PC-9 (cell line): ENCODE measurements at regions of chr6 and their contacts with region 1.

Region 1: DNA sequence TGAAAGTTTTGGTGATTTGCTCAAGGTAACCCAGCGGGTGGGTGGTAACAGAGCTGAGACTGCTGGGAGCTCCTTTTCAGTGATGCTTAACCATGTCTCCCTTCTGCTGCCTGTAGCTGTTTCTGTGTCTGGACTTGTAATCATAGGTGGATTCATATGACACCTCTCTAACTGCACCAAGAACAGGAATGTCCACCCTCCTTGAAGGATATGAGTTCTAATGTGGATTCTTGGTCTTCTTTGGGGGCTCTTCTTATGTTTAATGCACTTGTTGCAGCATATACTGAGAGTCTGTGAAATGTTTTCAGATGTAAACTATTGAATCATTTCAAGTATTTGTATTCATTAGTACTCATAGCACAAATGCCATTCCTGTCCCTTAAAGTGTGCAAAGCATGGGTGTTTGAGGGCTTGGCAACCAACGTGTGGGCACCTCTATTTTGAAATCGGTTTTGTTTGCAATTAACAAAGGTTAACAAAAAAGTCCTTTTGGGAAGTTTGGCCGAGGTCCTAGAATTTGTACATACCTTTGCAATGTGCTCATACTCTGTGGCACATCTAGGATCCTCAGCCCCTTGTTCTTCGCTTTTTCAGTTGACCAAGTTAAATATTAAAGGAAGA is 138.0 kb downstream of the SOX4 start:
- DNase-seq: peak; percentile 68 to 95
- H3K4me3 ChIP-seq: no peak overlapping the region
- H3K27ac ChIP-seq: peak overlapping the region; percentile 63
- H3K4me1 ChIP-seq: peaks cover 43% of the 10 kb centered on the region
- H3K27me3 ChIP-seq: no peaks in the 10 kb centered on the region
- CTCF ChIP-seq: no peak

Region 2: GRCh38 chr6:21603082-21603952 is 128.2 kb before region 1 on chr6:
- CTCF ChIA-PET with region 1: no interaction called
- POLR2A ChIA-PET with region 1: no interaction called
- intact Hi-C with region 1: no loop called
- DNase-seq: no peak
- H3K4me3 ChIP-seq: no peak overlapping the region
- H3K27ac ChIP-seq: no peak overlapping the region
- H3K4me1 ChIP-seq: peaks cover 14% of the 10 kb centered on the region
- H3K27me3 ChIP-seq: no peaks in the 10 kb centered on the region
- CTCF ChIP-seq: no peak

Region 3: GRCh38 chr6:21754891-21755290 is 23.4 kb after region 1 on chr6:
- CTCF ChIA-PET with region 1: interaction called, 4 read pairs
- POLR2A ChIA-PET with region 1: interaction called, 8 read pairs
- intact Hi-C with region 1: loop called (anchors 1 kb)
- DNase-seq: peak; percentile 66 to 91
- H3K4me3 ChIP-seq: peak overlapping the region; percentile 13; the same call in 1 of the 2 replicates
- H3K27ac ChIP-seq: peak overlapping the region; percentile 73
- H3K4me1 ChIP-seq: peaks cover 53% of the 10 kb centered on the region
- H3K27me3 ChIP-seq: no peaks in the 10 kb centered on the region
- CTCF ChIP-seq: no peak

Region 4: DNA sequence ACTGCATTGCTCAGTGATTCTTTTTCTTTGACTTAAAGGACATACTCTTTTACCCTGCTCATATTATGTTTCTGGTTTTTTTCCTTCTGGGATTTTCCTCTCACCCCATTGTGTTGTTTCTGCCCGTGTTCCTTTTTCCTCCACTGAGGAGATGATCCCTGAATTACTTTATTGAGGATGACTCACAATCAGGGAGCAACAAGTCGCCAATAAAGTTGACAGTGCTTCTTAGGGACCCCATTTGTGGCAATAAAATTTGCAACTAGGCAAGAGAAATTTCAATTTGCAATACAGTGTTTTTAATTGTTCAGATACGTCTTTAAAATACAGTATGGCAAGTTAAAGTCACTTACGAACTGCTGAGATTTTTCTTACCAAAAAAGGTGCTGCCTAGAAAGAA is 80.0 kb after region 1 on chr6:
- CTCF ChIA-PET with region 1: no interaction called
- POLR2A ChIA-PET with region 1: no interaction called
- intact Hi-C with region 1: no loop called
- DNase-seq: no peak
- H3K4me3 ChIP-seq: no peak overlapping the region
- H3K27ac ChIP-seq: no peak overlapping the region
- H3K4me1 ChIP-seq: peaks cover 5% of the 10 kb centered on the region; the same call in 1 of the 2 replicates
- H3K27me3 ChIP-seq: no peaks in the 10 kb centered on the region
- CTCF ChIP-seq: no peak

Region 5: DNA sequence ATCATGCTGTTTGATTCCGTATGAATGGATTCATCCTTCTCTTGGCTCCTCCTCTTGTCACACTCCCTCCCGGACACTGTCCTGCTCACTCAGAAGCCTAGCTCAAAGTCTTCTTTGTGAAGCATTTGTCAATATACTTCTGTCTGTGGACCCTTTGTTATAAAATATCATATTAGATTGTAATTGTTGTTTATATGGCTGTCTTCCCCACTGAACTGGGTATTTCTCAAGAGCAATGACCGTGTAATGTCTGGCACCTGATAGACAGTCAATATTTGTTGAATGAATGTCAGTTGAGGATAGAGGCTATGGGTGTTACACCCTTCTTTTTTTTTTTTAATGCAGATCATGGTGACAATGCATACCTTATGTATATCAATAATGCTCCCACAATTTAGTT is 197.3 kb after region 1 on chr6:
- CTCF ChIA-PET with region 1: no interaction called
- POLR2A ChIA-PET with region 1: no interaction called
- intact Hi-C with region 1: loop called (anchors 5 kb)
- DNase-seq: no peak
- H3K4me3 ChIP-seq: no peak overlapping the region
- H3K27ac ChIP-seq: no peak overlapping the region
- H3K4me1 ChIP-seq: peaks cover 19% of the 10 kb centered on the region
- H3K27me3 ChIP-seq: no peaks in the 10 kb centered on the region
- CTCF ChIP-seq: no peak

Region 6: DNA sequence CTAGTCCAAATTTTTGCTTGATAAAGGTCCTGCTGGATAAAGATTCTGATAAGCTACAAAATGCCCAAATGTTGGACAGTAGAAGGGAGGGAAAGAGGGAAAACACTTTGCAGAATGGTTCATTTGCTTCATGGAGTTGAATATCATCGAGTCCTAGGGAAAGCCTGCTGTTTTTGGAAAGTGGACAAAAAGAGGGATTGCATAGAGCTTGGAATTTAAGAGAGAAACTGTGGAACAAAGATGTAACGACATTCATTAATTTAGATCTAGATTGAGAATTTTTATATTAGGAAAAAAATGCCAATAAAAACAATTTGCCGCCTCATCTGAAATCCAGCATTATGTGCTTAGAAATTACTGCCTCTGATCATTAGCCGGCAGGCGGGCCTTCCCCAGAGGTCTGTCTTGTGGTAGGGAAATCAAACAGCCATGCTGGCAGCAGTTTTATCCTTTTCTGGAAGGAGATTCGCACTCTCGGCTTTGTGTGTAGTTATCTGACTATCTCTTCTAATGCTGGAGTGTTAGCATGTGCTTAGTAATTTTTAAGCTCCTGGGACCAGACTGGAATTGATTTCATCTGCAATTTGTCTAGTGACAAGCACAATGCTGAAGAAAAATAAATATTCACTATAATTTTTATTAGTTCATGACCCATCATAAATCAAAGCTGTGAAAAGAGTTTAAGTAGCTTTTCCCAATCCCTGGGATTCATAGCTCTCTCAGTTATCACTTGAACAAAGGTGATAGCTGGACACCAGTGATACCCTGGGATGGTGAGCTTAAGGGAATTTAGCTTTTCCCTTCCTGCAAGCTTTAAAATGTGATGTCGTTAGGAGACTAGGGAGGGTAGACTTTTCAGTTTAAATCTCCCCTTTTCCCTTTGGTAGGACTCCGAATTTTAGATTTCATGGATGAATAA is 235.8 kb after region 1 on chr6:
- CTCF ChIA-PET with region 1: no interaction called
- POLR2A ChIA-PET with region 1: no interaction called
- intact Hi-C with region 1: no loop called
- DNase-seq: no peak
- H3K4me3 ChIP-seq: no peak overlapping the region
- H3K27ac ChIP-seq: no peak overlapping the region
- H3K4me1 ChIP-seq: no peaks in the 10 kb centered on the region
- H3K27me3 ChIP-seq: no peaks in the 10 kb centered on the region
- CTCF ChIP-seq: no peak

Region 7: GRCh38 chr6:21984561-21984960 is 253.0 kb after region 1 on chr6:
- CTCF ChIA-PET with region 1: no interaction called
- POLR2A ChIA-PET with region 1: no interaction called
- intact Hi-C with region 1: no loop called
- DNase-seq: no peak
- H3K4me3 ChIP-seq: no peak overlapping the region
- H3K27ac ChIP-seq: no peak overlapping the region
- H3K4me1 ChIP-seq: peaks cover 14% of the 10 kb centered on the region
- H3K27me3 ChIP-seq: no peaks in the 10 kb centered on the region
- CTCF ChIP-seq: no peak

Region 8: GRCh38 chr6:22221630-22222029 is 490.1 kb after region 1 on chr6:
- CTCF ChIA-PET with region 1: no interaction called
- POLR2A ChIA-PET with region 1: no interaction called
- intact Hi-C with region 1: loop called (anchors 5 kb)
- DNase-seq: peak; percentile 75 to 96
- H3K4me3 ChIP-seq: peak overlapping the region; percentile 48
- H3K27ac ChIP-seq: peak overlapping the region; percentile 98
- H3K4me1 ChIP-seq: peaks cover 40% of the 10 kb centered on the region
- H3K27me3 ChIP-seq: no peaks in the 10 kb centered on the region
- CTCF ChIP-seq: no peak